ENCODE measurements at regions of chr16 and their contacts with region 1.

Region 1: GRCh38 chr16:13453938-13454553 is 465.9 kb upstream of the ERCC4 start:
- DNase-seq: no peak
- ATAC-seq: no peak
- H3K4me3 ChIP-seq: no peak overlapping the region
- H3K27ac ChIP-seq: no peak overlapping the region
- H3K4me1 ChIP-seq: no peaks in the 10 kb centered on the region
- H3K27me3 ChIP-seq: no peaks in the 10 kb centered on the region

Region 2: DNA sequence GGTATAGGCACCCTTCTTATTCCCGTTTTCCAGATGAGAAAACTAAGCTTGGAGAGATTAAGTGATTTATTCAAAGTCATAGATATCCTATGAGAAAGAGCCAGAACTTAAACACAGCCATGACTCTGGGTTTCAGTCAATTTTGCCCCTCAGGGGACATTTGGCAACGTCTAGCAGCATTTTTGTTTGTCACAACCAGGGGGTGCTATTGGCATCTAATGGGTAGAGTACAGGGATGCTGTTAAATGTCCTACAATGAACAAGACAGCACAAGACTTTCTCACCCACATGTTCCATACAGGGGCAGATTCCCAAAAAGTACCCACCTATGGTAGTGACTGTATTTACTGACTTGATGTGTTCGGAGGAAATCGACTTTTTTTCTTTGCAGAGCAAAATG is 557.5 kb before region 1 on chr16:
- intact Hi-C with region 1: loop called in 1 of 2 experiments (anchors 10 kb)
- DNase-seq: no peak
- ATAC-seq: no peak
- H3K4me3 ChIP-seq: no peak overlapping the region
- H3K27ac ChIP-seq: no peak overlapping the region
- H3K4me1 ChIP-seq: no peaks in the 10 kb centered on the region
- H3K27me3 ChIP-seq: no peaks in the 10 kb centered on the region

Region 3: GRCh38 chr16:13176711-13177110 is 277.3 kb before region 1 on chr16:
- intact Hi-C with region 1: no loop called
- DNase-seq: no peak
- ATAC-seq: no peak
- H3K4me3 ChIP-seq: no peak overlapping the region
- H3K27ac ChIP-seq: no peak overlapping the region
- H3K4me1 ChIP-seq: no peaks in the 10 kb centered on the region
- H3K27me3 ChIP-seq: no peaks in the 10 kb centered on the region

Region 4: GRCh38 chr16:13402601-13403000 is 51.4 kb before region 1 on chr16:
- intact Hi-C with region 1: no loop called
- DNase-seq: no peak
- ATAC-seq: no peak
- H3K4me3 ChIP-seq: no peak overlapping the region
- H3K27ac ChIP-seq: no peak overlapping the region
- H3K4me1 ChIP-seq: no peaks in the 10 kb centered on the region
- H3K27me3 ChIP-seq: no peaks in the 10 kb centered on the region